ENCODE measurements at regions of chr1 and their contacts with region 1.

Region 1: GRCh38 chr1:247119600-247120407 is 15.6 kb upstream of the ZNF669 start:
- DNase-seq: no peak
- ATAC-seq: no peak

Region 2: DNA sequence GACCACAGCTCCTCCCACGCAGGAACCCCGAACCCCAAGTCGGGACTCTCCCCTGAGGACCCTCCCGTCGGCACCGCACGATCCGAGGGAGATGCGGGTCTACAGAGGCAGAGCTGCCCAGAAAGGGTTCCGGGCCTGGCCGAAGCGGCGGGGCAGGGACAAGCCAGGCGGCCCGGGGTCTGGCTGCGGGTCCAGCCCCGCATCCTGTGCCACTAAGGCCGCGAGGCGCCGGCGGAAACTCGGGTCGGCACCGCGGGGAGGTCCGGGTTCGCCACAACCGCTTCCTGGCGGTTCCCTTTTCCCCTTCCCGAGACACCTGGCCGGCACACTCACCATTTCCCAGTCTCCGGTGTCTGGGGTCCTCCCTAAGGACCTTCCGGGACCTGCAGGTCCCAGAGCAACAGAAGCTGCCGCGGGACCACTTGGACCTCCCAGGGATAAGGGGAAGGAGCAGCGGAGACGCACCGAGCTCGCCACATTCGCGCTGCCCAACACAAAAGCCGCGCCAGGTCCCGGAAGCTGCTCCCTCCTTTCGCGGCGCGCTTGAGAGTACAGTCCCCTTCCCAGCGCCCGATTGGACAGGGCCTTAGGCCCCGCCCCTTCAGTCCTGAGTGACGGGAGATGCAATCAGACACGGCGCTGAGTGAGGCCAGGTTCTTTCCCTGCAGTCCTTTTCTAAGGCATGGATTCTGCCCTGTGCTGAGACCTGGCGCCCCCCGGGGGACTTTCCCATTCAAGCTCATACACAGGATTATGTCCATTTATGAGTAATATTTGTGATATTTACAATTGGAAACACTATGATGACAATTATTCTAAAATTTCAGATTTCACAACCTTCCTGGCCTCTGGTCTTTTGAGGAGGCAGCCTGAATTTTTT is 41.3 kb before region 1 on chr1 and contains the start of gene ZNF670:
- intact Hi-C with region 1: no loop called
- DNase-seq: peak; percentile 96
- ATAC-seq: peak; percentile 100
- total RNA-seq, gene ZNF670: 1.5 to 1.8 TPM

Region 3: GRCh38 chr1:247165674-247166073 is 45.9 kb after region 1 on chr1:
- intact Hi-C with region 1: loop called (anchors 5 kb)
- DNase-seq: no peak
- ATAC-seq: no peak

Region 4: DNA sequence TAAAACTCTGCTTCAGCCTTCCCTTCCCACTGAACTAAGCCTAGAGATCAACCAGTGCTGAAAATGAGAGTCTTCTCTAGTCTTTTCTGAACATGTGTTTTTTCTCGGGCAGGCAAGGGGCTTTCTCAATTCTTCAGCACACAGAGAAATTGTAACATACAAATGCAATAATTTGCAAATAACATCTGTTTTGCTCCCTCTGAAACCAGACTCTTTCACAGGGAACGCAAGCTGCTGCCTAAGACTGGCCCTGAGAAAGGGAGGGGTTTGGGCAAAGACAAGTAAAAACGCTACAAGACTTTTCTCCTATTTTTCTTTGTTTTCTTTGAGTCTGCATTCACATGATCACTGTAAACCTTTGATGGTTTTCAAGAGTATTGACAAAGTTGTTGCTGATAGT is 96.5 kb after region 1 on chr1:
- intact Hi-C with region 1: no loop called
- DNase-seq: no peak
- ATAC-seq: no peak

Measured in left cardiac atrium (tissue), 4 donors.